Left lung (tissue), 14 donors: ENCODE measurements at regions of chr10 and their contacts with region 1.

Region 1: GRCh38 chr10:22997102-22997501 is 69.2 kb downstream of the ARMC3 start:
- DNase-seq: no peak
- ATAC-seq: no peak
- H3K4me3 ChIP-seq: no peak overlapping the region
- H3K27ac ChIP-seq: no peak overlapping the region
- H3K4me1 ChIP-seq: no peaks in the 10 kb centered on the region
- H3K27me3 ChIP-seq: peaks cover 3 to 50% of the 10 kb centered on the region in 2 donors
- CTCF ChIP-seq: no peak

Region 2: GRCh38 chr10:22003079-22003913 is 993.8 kb before region 1 on chr10 and contains the start of gene DNAJC1:
- intact Hi-C with region 1: loop called in 1 of 2 experiments (anchors 10 kb)
- DNase-seq: peak; percentile 97 to 99 (median 98)
- ATAC-seq: peak; percentile 99
- H3K4me3 ChIP-seq: peak within 1 kb of the TSS; percentile 78
- H3K27ac ChIP-seq: peak within 1 kb of the TSS; percentile 91 to 93
- H3K4me1 ChIP-seq: peaks cover 6 to 23% of the 10 kb centered on the region in 2 donors
- H3K27me3 ChIP-seq: no peaks in the 10 kb centered on the region
- CTCF ChIP-seq: peak in 1 of 2 donors; percentile 21
- polyA plus RNA-seq, gene DNAJC1: 29.1 to 33.3 (median 32.7) TPM